CD14-positive monocyte (primary cell): ENCODE measurements at regions of chr2 and their contacts with region 1.

Region 1: GRCh38 chr2:18749912-18750526 is 160.7 kb upstream of the NT5C1B start:
- DNase-seq: no peak
- H3K4me3 ChIP-seq: no peak overlapping the region
- H3K4me3 Mint-ChIP-seq: no peak overlapping the region
- H3K27ac ChIP-seq: no peak overlapping the region
- H3K27ac Mint-ChIP-seq: no peak overlapping the region
- H3K4me1 ChIP-seq: no peaks in the 10 kb centered on the region
- H3K4me1 Mint-ChIP-seq: no peaks in the 10 kb centered on the region
- H3K27me3 ChIP-seq: no peaks in the 10 kb centered on the region
- H3K27me3 Mint-ChIP-seq: peaks cover 2 to 4% (median 3%) of the 10 kb centered on the region in 3 donors
- CTCF ChIP-seq: peak; percentile 46

Region 2: GRCh38 chr2:18701981-18702380 is 48.0 kb before region 1 on chr2:
- intact Hi-C with region 1: no loop called
- DNase-seq: no peak
- H3K4me3 ChIP-seq: no peak overlapping the region
- H3K4me3 Mint-ChIP-seq: no peak overlapping the region
- H3K27ac ChIP-seq: no peak overlapping the region
- H3K27ac Mint-ChIP-seq: no peak overlapping the region
- H3K4me1 ChIP-seq: no peaks in the 10 kb centered on the region
- H3K4me1 Mint-ChIP-seq: no peaks in the 10 kb centered on the region
- H3K27me3 ChIP-seq: no peaks in the 10 kb centered on the region
- H3K27me3 Mint-ChIP-seq: no peaks in the 10 kb centered on the region
- CTCF ChIP-seq: no peak

Region 3: DNA sequence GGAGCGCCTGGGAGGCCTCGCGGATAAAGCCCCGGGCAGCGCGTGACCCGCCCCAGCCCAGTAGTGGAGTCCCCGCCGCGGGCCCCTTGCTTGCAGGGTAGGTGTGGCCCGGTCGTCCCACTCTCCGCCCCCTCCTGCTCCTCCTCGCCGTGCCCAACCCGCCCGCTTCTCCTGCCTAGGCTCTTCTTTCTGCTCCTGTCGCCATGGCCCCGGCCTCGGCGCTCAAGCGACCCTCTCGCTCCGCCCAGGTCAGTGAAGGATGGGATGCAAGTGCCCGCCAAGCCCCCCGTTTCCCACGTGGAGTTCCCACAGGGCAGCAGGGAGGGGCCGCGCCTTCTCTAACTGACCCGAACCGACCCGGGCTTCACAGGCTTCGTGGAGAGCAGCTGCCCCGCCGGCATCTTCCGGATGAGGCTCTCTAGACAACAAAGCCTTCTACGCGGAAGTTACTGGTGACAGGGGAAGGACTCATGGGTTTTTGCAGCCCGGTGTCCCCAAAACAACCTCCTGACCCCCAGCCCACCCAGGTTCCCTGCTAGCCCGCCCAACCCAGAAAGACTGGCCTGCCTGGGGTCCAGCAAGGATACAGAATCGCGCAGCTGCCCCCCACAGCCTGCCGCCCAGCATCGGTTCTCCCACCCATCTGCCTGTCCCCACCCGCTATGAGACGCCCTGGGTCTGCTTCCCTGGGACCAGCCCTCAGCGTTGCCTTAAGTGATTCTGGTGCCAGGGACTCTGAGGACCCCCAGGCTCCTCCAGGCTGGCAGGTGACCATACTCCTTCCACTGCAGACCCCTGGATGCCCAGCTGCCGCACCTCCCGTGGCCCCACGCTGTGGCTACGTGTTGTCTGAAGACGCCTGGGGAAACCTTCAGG is 1118.9 kb after region 1 on chr2:
- intact Hi-C with region 1: loop called (anchors 5 kb)
- DNase-seq: peak; percentile 42 to 56 (median 45)
- H3K4me3 ChIP-seq: peak overlapping the region; percentile 43 to 85 (median 74)
- H3K4me3 Mint-ChIP-seq: peak overlapping the region; percentile 93 to 98
- H3K27ac ChIP-seq: peak overlapping the region; percentile 47 to 77
- H3K27ac Mint-ChIP-seq: peak overlapping the region in 6 of 7 donors; percentile 76 to 91 (median 88)
- H3K4me1 ChIP-seq: peaks cover 13 to 15% of the 10 kb centered on the region in 2 donors
- H3K4me1 Mint-ChIP-seq: peaks cover 19% of the 10 kb centered on the region
- H3K27me3 ChIP-seq: peaks cover 0 to 2% of the 10 kb centered on the region in 2 donors
- H3K27me3 Mint-ChIP-seq: peaks cover 12 to 28% (median 13%) of the 10 kb centered on the region in 3 donors
- CTCF ChIP-seq: no peak